ENCODE measurements at regions of chr1 and their contacts with region 1.

Region 1: DNA sequence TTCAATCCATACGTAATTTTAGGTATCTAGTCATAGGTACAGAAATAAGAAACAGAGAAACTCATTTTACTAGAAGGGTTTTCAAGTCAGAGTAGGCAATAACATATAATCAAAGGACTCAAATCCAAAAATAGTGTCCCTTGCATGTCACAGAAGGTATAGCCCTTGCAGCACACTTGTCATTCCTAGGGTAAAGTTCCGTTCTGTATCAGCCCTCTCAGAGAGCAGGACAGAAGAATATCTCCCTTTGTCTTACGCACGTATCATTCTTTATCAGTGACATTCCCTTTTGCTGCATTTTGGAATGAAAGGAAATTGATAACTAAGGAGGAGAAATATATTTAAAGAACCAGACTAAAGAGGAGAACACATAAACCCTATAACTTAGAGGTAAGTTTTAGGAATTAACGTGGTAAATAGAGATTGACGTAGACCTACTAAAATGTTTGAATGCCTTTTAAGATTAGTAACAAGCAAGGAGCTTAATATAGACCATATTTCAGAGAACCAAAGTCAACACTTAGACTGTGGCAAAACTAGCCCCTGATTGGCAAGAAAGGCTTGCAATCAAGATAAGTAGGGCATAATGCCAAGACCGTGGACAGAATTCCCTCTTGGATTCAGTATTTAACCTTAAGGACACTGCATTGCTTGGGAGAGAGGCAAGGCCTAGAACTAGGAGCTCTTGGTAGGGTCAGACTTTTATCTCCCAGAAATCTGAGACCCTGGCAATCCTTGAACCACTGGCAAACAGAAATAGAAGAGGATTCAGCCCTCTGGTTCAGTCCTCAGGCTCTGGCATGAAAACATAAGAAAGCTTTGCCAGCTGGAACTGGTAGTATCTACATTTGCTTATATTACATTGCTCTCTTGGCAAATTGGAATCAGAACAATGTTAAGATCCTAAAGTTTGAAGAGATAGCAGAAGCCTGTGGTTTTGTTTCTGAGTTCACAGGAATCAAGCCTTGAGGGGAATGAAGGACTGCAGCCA is 232.1 kb downstream of the ASTN1 start:
- DNase-seq: no peak
- H3K4me3 ChIP-seq: no peak overlapping the region
- H3K27ac ChIP-seq: no peak overlapping the region
- H3K4me1 ChIP-seq: no peaks in the 10 kb centered on the region
- H3K27me3 ChIP-seq: peaks cover 0 to 3% of the 10 kb centered on the region in 2 donors
- CTCF ChIP-seq: no peak
- POLR2A ChIP-seq: no peak

Region 2: GRCh38 chr1:175951627-175952026 is 980.8 kb before region 1 on chr1:
- intact Hi-C with region 1: no loop called
- DNase-seq: no peak
- H3K4me3 ChIP-seq: no peak overlapping the region
- H3K27ac ChIP-seq: no peak overlapping the region
- H3K4me1 ChIP-seq: no peaks in the 10 kb centered on the region
- H3K27me3 ChIP-seq: no peaks in the 10 kb centered on the region
- CTCF ChIP-seq: no peak
- POLR2A ChIP-seq: no peak

Region 3: GRCh38 chr1:176878750-176879536 is 53.5 kb before region 1 on chr1:
- intact Hi-C with region 1: no loop called
- DNase-seq: no peak
- H3K4me3 ChIP-seq: no peak overlapping the region
- H3K27ac ChIP-seq: no peak overlapping the region
- H3K4me1 ChIP-seq: no peaks in the 10 kb centered on the region
- H3K27me3 ChIP-seq: no peaks in the 10 kb centered on the region
- CTCF ChIP-seq: no peak
- POLR2A ChIP-seq: no peak

Region 4: GRCh38 chr1:176949033-176949662 is 16.7 kb after region 1 on chr1:
- intact Hi-C with region 1: no loop called
- DNase-seq: peak in 1 of 2 donors; percentile 53
- H3K4me3 ChIP-seq: no peak overlapping the region
- H3K27ac ChIP-seq: no peak overlapping the region
- H3K4me1 ChIP-seq: no peaks in the 10 kb centered on the region
- H3K27me3 ChIP-seq: no peaks in the 10 kb centered on the region
- CTCF ChIP-seq: peak in 1 of 3 donors; percentile 24
- POLR2A ChIP-seq: no peak

Region 5: GRCh38 chr1:177439301-177439700 is 506.9 kb after region 1 on chr1:
- intact Hi-C with region 1: loop called (anchors 5 kb)
- DNase-seq: no peak
- H3K4me3 ChIP-seq: no peak overlapping the region
- H3K27ac ChIP-seq: no peak overlapping the region
- H3K4me1 ChIP-seq: no peaks in the 10 kb centered on the region
- H3K27me3 ChIP-seq: no peaks in the 10 kb centered on the region
- CTCF ChIP-seq: no peak
- POLR2A ChIP-seq: no peak